ENCODE measurements at regions of chr10 and their contacts with region 1.

Region 1: DNA sequence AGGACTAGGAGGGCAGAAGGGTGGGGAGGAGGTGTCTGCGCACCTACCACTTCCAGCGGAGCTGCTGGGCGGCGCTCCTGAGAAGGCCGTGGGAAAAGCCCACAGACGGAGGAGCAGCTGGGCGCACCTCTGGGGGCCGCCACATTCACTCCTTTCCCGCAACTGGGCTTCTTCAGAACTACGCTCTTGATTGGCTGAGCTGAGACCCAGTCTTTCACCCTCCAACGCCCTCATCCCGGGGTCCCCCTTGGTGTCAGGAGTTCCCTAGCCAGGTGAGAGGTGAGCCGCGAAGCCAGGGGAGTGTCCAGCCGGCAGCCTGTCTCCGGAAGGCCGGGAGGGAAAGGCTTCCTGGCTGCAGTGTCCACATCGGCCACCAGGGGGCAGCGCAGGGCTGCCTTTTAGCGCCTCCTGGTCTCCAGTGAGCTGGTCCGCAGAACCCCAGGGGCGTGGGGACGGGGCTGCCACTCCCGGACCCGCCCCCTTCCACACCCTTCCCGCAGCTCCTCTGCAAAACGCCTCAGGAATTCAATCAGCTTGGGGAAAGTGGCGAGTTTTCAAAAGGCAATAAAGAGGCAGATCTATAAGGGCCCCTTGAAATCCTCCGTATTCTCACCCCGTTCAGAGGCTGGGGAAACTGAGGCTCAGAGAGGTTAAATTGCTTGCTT is 98.8 kb downstream of the CHST15 start:
- DNase-seq: peak; percentile 93
- ATAC-seq: peak; percentile 87
- H3K4me3 ChIP-seq: peak overlapping the region; percentile 6
- H3K27ac ChIP-seq: no peak overlapping the region
- H3K4me1 ChIP-seq: peaks cover 28% of the 10 kb centered on the region
- H3K27me3 ChIP-seq: peaks cover 44% of the 10 kb centered on the region
- CTCF ChIP-seq: peak; percentile 99

Region 2: DNA sequence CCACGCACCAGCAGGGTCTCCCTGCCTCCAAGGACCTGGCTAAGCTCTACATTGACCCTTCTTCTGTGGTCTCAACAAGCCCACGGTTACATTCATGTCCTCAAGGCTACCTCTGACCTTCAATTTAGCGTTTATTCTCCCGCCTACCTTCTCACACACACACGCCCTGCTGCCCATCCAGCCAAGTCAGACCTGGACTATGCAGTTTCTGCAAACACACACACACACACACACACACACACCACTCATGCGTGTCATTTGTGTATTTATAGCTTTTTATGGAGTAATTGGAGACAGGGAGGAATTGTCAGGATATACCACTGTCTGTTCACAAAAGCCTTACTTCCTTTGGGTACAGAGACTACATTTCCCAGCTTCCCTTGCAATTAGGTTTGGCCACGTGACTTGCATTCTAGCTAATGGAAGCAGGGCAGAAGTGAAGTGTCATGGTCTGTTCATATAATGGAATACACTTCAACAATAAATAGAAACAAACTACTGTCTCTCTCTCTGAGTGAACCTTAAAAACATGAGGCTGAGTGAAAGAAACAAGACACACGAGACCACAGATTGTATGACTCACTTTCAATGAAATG is 49.1 kb before region 1 on chr10:
- intact Hi-C with region 1: no loop called
- DNase-seq: no peak
- ATAC-seq: no peak
- H3K4me3 ChIP-seq: no peak overlapping the region
- H3K27ac ChIP-seq: no peak overlapping the region
- H3K4me1 ChIP-seq: no peaks in the 10 kb centered on the region
- H3K27me3 ChIP-seq: no peaks in the 10 kb centered on the region
- CTCF ChIP-seq: no peak

Region 3: GRCh38 chr10:124388823-124389612 is 394.5 kb after region 1 on chr10:
- intact Hi-C with region 1: loop called (anchors 5 kb)
- DNase-seq: peak; percentile 95
- ATAC-seq: peak; percentile 99
- H3K4me3 ChIP-seq: peak overlapping the region; percentile 58
- H3K27ac ChIP-seq: peak overlapping the region; percentile 42
- H3K4me1 ChIP-seq: peaks cover 8% of the 10 kb centered on the region
- H3K27me3 ChIP-seq: no peaks in the 10 kb centered on the region
- CTCF ChIP-seq: peak; percentile 95